ENCODE measurements at regions of chr6 and their contacts with region 1.

Region 1: GRCh38 chr6:51959744-51960383 is 127.5 kb downstream of the PKHD1 start:
- DNase-seq: peak; percentile 65
- H3K4me3 Mint-ChIP-seq: no peak overlapping the region
- H3K27ac Mint-ChIP-seq: no peak overlapping the region
- H3K4me1 Mint-ChIP-seq: no peaks in the 10 kb centered on the region
- H3K27me3 Mint-ChIP-seq: no peaks in the 10 kb centered on the region
- CTCF ChIP-seq: peak; percentile 59

Region 2: DNA sequence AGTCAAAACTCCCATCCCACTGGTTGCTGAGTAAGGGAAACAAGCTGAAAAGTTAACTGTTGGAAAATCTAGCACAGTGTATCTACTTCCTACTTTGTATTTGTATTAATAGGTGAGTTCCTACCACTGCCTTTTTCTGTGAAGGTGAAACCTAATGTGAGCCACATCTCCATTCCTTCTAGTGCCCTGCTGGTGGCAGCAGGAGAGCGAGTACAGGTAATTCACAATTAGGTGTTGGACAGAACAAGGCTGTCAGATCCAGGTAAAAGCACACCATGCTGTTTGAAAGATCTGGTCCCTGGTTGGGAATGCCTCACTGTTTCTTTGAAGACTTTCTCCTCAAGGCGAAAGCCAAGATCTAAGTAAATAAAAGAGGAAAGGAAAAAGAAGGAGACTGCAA is 400.8 kb before region 1 on chr6:
- CTCF ChIA-PET with region 1: no interaction called
- intact Hi-C with region 1: loop called (anchors 5 kb)
- DNase-seq: peak; percentile 30
- H3K4me3 Mint-ChIP-seq: no peak overlapping the region
- H3K27ac Mint-ChIP-seq: no peak overlapping the region
- H3K4me1 Mint-ChIP-seq: no peaks in the 10 kb centered on the region
- H3K27me3 Mint-ChIP-seq: no peaks in the 10 kb centered on the region
- CTCF ChIP-seq: peak; percentile 33

Region 3: GRCh38 chr6:51855310-51856082 is 104.4 kb before region 1 on chr6:
- CTCF ChIA-PET with region 1: interaction called, 5 read pairs
- intact Hi-C with region 1: loop called (anchors 1 kb)
- DNase-seq: peak; percentile 39
- H3K4me3 Mint-ChIP-seq: no peak overlapping the region
- H3K27ac Mint-ChIP-seq: no peak overlapping the region
- H3K4me1 Mint-ChIP-seq: peaks cover 8% of the 10 kb centered on the region
- H3K27me3 Mint-ChIP-seq: no peaks in the 10 kb centered on the region
- CTCF ChIP-seq: peak; percentile 67